PC-9 (cell line): ENCODE measurements at regions of chr2 and their contacts with region 1.

Region 1: GRCh38 chr2:150478200-150478974 is 9.1 kb downstream of the RND3 start:
- DNase-seq: peak; percentile 63 to 79
- H3K4me3 ChIP-seq: peak overlapping the region; percentile 34; the same call in 1 of the 2 replicates
- H3K27ac ChIP-seq: peak overlapping the region; percentile 93
- H3K4me1 ChIP-seq: peaks cover 100% of the 10 kb centered on the region
- H3K27me3 ChIP-seq: no peaks in the 10 kb centered on the region
- CTCF ChIP-seq: no peak

Region 2: DNA sequence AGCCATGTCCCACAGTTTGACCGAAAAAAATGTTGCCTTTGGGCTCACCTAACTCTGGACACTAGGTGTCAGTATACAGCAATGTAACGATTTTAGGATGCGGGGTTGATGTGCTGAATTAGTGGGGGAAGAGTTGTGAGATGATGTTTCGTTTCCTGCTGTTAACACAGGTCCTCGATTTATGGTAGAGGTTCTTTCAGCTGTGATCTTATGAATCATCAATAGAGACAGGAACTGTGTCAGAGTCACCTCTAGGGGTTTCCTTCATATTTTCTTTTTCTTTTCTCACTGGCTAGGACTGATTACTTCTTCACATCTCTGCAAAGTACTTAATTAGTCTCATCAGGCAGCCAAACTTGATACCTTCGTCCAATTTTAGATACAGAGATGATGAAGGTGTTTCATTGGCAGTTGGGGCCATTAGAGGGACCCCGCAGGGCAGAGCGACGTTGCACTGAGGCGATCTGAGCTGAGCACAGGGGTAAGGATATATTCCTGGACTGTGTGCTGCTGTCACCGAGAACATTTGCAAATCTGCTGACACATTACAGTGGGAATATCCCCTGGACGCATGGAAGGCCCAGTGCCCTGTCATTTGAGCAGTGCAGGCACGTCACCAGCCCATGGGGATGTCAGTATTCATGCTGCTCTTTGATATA is 880.6 kb before region 1 on chr2:
- CTCF ChIA-PET with region 1: no interaction called
- POLR2A ChIA-PET with region 1: no interaction called
- intact Hi-C with region 1: loop called (anchors 1 kb)
- DNase-seq: peak; percentile 50 to 65
- H3K4me3 ChIP-seq: no peak overlapping the region
- H3K27ac ChIP-seq: no peak overlapping the region
- H3K4me1 ChIP-seq: peaks cover 6% of the 10 kb centered on the region; the same call in 1 of the 2 replicates
- H3K27me3 ChIP-seq: no peaks in the 10 kb centered on the region
- CTCF ChIP-seq: peak; percentile 70

Region 3: GRCh38 chr2:150097891-150098595 is 380.3 kb before region 1 on chr2:
- CTCF ChIA-PET with region 1: interaction called, 10 read pairs
- POLR2A ChIA-PET with region 1: no interaction called
- intact Hi-C with region 1: no loop called
- DNase-seq: no peak
- H3K4me3 ChIP-seq: no peak overlapping the region
- H3K27ac ChIP-seq: peak overlapping the region; percentile 37
- H3K4me1 ChIP-seq: peaks cover 6% of the 10 kb centered on the region; the same call in 1 of the 2 replicates
- H3K27me3 ChIP-seq: no peaks in the 10 kb centered on the region
- CTCF ChIP-seq: no peak

Region 4: GRCh38 chr2:150167711-150168110 is 310.7 kb before region 1 on chr2:
- CTCF ChIA-PET with region 1: no interaction called
- POLR2A ChIA-PET with region 1: interaction called, 3 read pairs
- intact Hi-C with region 1: loop called (anchors 1 kb)
- DNase-seq: peak; percentile 42 to 86
- H3K4me3 ChIP-seq: no peak overlapping the region
- H3K27ac ChIP-seq: peak overlapping the region; percentile 98
- H3K4me1 ChIP-seq: peaks cover 48% of the 10 kb centered on the region
- H3K27me3 ChIP-seq: no peaks in the 10 kb centered on the region
- CTCF ChIP-seq: no peak

Region 5: DNA sequence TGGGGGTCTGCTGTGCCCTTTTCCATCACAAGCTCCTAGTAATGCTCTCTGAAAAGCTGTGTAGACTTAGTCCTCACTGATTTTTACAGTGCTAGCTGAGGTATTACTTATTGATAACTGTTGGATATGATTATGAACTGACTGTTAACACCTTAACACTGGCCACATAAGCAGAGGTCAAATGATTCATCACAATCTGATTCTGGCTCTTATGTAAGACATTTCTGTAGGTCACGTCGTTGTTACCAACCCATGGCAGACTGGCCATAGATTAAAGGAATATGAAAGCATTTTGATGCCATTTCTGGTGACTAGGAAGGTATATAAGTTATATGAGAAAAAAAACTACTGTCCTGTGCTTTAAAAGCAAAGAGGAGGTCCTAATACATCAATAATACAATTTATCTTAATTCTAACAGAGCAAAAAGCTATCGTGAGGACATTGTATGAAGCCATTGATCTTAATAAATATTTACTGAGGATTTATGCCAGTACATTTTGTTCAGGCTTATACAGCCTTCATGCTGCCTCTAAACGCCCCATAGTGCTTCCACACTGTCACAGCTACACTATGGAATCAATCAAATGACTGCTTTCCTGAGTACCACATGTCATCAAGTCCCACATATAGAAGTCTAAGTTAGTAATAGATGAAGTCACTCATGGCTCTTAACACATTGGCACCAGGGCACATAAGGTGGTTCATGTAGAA is 16.0 kb after region 1 on chr2:
- CTCF ChIA-PET with region 1: no interaction called
- POLR2A ChIA-PET with region 1: interaction called, 12 read pairs
- intact Hi-C with region 1: no loop called
- DNase-seq: no peak
- H3K4me3 ChIP-seq: no peak overlapping the region
- H3K27ac ChIP-seq: no peak overlapping the region
- H3K4me1 ChIP-seq: no peaks in the 10 kb centered on the region
- H3K27me3 ChIP-seq: no peaks in the 10 kb centered on the region
- CTCF ChIP-seq: no peak

Region 6: DNA sequence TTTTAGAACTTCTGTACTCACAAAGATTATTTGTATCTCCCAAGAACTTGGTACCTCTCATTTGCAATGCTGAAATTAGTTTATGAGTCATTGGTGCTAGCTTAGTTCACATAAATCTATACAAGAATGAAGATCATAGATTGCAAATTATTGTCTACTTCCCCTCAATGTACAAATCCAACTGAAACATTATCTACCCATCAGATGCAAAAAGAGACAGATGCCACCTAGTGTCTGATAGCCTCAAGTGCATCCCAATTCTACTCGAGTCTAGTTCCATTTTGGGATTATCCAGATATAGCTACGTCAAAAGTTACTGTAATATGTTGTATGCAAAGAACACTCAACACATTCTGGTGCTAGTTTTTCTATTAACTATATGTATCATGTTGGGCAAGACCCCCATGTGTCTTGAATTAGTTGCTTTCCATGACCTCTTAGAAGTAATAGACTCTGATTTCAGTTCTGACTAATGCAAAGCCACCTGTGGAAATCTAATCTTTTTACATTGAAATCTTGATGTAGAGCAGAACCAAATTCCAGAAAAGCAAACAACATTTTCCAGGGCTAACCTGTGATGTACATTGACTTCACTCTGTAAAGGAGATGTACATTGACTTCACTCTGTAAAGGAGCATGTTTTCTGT is 573.3 kb after region 1 on chr2:
- CTCF ChIA-PET with region 1: no interaction called
- POLR2A ChIA-PET with region 1: no interaction called
- intact Hi-C with region 1: loop called (anchors 2 kb)
- DNase-seq: peak in 1 of 2 experiments; percentile 12
- H3K4me3 ChIP-seq: no peak overlapping the region
- H3K27ac ChIP-seq: no peak overlapping the region
- H3K4me1 ChIP-seq: peaks cover 15% of the 10 kb centered on the region; the same call in 1 of the 2 replicates
- H3K27me3 ChIP-seq: no peaks in the 10 kb centered on the region
- CTCF ChIP-seq: peak; percentile 63